Dendritic cell treated with granulocyte-macrophage colony-stimulating factor and Interleukin-4, amounts not matched to agents 40 ng/mL and 50 ng/mL, for 4 days (primary cell): ENCODE measurements at regions of chr1 and their contacts with region 1.

Region 1: DNA sequence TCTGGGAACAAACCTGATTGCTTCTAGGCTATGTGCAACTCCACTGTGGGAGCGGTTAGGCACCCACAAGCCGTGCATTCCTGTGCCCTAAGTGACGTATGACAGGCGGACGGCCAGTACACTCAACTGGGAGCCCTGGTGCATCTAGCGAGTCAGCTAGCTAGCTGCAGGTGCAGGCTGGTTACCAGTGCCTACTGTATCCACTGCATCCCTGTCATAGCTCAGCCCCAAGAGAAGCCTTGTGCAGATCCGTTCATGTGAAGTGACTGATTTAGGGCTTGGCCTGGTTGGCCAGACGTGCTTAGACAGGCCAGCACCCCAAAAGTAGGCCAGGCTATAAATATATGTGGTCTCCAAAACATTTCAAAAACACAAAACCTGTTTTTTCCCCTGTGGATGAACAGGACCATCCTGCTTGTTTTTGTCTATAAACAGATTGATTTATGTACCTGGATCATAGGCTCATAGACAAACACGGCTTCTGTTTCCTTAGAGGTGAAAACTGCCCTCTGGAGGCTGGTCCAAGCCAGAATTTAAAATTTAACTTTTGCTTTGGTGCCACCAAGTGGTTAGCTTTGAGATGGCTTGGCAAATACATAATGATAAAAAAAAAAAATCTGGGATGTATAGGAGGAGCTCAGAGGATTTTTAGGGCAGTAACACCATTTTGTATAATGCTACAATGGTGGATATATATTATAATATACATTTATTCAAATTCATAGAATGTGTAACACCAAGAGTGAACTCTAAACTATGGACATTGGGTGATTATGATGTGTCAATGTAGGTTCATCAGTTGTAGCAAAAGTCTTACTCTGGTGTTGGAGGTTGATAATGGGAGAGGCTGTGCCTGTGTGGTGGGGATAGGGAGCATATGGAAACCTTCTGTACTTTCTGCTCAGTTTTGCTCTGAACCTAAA is 68.5 kb downstream of the GIPC2 start:
- H3K4me3 Mint-ChIP-seq: no peak overlapping the region
- H3K27ac Mint-ChIP-seq: no peak overlapping the region
- H3K4me1 Mint-ChIP-seq: no peaks in the 10 kb centered on the region
- H3K27me3 Mint-ChIP-seq: no peaks in the 10 kb centered on the region

Region 2: DNA sequence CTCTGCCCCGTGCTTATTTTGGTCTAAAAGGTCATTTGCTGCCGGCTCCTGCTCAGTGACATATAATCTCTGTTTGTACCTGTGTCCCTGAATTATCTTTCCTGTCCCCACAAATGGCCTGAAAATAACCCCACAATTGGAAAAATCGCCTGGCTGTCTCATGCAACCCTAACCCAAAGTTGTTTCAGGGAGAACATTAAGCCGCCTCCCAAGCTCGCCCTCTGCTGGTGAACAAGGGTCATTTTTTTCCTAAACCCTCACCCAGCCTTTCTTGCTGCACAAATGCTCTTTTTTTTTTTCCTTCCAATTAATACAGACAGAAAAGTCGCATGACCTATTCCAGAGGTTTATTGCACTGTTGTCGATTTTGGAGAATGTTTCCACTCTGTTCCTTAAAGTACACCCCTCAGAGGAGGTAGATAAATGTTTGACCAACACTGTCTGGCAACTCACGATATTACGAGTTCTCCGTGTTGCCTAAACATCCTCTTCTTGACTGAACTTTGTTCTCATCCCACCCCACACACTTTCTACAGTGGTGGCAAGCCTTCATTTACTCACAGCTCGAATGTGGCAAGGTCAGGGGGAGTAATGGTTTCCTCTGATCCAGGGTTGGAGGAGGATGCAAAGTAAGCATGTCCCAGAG is 580.5 kb before region 1 on chr1:
- intact Hi-C with region 1: loop called (anchors 10 kb)
- H3K4me3 Mint-ChIP-seq: no peak overlapping the region
- H3K27ac Mint-ChIP-seq: no peak overlapping the region
- H3K4me1 Mint-ChIP-seq: peaks cover 16% of the 10 kb centered on the region
- H3K27me3 Mint-ChIP-seq: no peaks in the 10 kb centered on the region

Region 3: DNA sequence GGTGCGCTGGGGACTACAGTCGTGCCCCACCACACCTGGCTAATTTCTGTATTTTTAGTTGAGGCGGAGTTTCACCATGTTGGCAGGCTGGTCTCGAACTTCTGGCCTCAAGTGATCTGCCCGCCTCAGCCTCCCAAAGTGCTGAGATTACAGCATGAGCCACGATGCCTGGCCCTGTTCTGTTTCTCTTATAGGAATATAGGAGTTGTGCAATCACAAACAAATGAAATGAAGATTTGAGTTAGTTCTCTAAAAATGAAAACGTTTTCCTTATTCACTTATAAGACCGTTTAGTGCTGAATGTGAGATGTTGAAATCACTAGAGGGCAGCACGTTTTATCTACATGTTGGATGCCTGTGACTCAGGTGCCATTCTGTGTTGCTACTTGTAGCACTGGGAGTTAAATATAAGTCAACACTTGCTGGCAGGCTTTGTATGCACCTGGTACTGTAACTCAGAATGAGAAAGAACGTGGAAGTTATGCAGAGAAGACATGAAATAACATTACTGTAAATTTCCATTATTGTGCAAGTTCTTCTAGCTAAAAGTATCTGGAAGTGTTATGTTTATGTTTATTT is 289.1 kb before region 1 on chr1:
- intact Hi-C with region 1: loop called (anchors 10 kb)
- H3K4me3 Mint-ChIP-seq: no peak overlapping the region
- H3K27ac Mint-ChIP-seq: peak overlapping the region; percentile 58
- H3K4me1 Mint-ChIP-seq: peaks cover 8% of the 10 kb centered on the region
- H3K27me3 Mint-ChIP-seq: no peaks in the 10 kb centered on the region

Region 4: DNA sequence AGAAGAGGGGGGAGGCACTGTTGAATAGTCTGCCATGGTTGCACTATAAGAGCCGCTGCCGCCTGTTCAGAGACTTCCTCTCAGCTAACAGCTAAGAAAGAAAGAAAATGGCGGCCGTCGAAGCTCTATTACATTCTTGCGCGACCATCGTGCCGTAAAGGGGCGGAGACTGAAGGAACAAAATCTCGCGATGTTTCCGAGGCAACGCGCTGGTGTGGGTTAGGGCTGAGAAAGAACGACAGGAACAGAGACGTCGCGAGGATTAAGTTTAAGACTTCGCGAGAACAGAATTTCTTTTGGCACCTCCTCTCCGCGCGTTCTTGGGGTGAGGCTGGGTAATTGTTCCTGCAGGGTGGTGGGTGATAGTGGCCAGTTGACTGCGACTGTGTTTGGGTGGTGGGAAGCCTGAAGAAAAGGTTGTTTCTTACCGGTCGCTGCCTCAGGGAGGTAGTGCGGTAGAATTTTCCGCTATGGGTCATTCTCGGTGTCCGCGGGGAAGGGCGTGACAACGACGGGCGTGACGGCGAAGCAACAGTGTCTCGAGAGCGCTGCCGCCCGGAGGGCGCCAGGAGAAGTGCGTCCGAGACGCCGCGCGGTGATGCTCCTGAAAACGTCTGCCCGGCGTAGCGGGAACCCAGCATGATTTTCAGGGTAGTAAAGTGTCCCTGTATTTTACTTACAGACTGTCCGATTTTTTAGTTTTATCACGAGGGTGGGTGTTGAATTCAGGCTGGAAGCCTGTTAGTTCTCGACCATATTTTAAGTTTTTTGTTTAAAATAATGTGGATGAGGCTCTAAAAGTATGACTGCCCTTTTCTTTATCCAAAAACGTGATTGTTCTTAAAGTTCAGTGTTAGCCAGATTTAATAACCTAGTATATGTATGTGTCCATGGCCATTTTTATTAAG is 135.1 kb before region 1 on chr1 and contains the start of gene FUBP1:
- intact Hi-C with region 1: loop called (anchors 5 kb)
- H3K4me3 Mint-ChIP-seq: no peak within 1 kb of the TSS
- H3K27ac Mint-ChIP-seq: no peak within 1 kb of the TSS
- H3K4me1 Mint-ChIP-seq: peaks cover 27% of the 10 kb centered on the region
- H3K27me3 Mint-ChIP-seq: no peaks in the 10 kb centered on the region

Region 5: DNA sequence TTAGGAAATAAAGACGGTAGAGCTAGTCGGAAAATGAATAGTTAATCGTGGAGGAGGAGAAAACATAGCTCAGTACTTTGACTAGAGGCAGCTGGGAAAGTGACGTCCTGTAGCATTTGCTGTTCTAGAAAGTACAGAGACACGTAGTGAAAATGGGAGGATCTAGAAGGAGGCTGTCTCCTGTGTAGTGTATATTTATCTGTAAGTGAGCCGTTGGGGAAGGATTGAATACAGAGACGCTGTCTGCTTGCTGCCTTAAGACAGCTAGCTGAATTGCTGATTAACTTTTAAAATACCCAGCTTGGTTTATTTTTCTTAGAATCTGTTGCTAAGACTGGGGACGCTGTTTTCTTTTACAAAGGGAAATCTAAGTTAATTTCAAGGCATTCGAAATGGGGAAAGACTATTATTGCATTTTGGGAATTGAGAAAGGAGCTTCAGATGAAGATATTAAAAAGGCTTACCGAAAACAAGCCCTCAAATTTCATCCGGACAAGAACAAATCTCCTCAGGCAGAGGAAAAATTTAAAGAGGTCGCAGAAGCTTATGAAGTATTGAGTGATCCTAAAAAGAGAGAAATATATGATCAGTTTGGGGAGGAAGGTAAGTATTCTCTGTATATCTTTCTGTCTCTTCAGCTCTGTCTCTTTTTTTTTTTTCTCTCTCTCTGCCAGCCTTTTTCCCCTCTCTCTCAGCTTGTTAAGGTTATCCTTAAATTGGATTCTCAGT is 109.4 kb before region 1 on chr1 and contains the start of gene DNAJB4:
- intact Hi-C with region 1: loop called (anchors 5 kb)
- H3K4me3 Mint-ChIP-seq: peak within 1 kb of the TSS; percentile 91
- H3K27ac Mint-ChIP-seq: peak within 1 kb of the TSS; percentile 96
- H3K4me1 Mint-ChIP-seq: peaks cover 15% of the 10 kb centered on the region
- H3K27me3 Mint-ChIP-seq: no peaks in the 10 kb centered on the region